Mucosa of descending colon (tissue), 3 donors: ENCODE measurements at regions of chr10 and their contacts with region 1.

Region 1: DNA sequence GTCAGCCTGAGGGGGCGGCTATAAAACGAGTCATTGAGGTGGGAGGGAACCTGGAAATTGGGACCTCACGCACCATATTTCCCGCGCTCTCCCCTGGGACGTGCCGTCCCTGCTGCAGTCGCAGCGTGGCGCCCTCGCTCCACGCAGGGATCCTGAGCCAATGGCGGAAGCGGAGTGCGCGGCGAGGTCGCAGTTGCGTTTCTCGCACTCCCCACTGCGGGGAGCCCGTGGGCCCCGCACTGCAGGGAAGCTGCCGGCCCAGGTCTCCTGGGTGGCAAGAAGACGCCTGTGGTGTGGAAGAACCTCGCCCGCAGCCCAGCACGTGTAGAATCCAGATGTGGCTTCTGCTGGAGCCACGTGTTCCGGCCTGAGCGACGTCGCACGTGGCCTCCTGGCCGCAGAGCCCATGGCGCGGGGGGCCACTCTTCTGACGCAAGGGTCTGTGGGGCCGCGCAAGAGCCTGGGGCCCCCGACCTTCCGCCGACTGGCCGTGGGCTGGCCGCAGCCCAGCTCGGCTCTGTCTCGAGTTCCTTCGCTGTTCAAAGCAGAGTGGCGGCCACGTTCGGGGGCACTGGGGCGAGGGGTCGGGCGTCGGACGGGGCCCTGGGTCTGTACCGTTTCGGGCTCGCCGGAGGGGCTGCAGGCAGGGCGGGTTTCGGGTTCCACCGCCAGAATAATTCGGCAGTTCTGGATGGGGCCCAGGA is 26.4 kb downstream of the HIF1AN start:
- DNase-seq: peak; percentile 75 to 86 (median 82)
- ATAC-seq: peak; percentile 99
- H3K4me3 ChIP-seq: no peak overlapping the region
- H3K4me1 ChIP-seq: peaks cover 11% of the 10 kb centered on the region
- CTCF ChIP-seq: peak; percentile 97

Region 2: GRCh38 chr10:100625816-100626215 is 63.7 kb after region 1 on chr10:
- intact Hi-C with region 1: no loop called
- DNase-seq: no peak
- ATAC-seq: no peak
- H3K4me3 ChIP-seq: no peak overlapping the region
- H3K4me1 ChIP-seq: no peaks in the 10 kb centered on the region
- CTCF ChIP-seq: no peak

Region 3: GRCh38 chr10:100730725-100731406 is 168.7 kb after region 1 on chr10:
- intact Hi-C with region 1: loop called in 1 of 2 experiments (anchors 10 kb)
- DNase-seq: peak in 1 of 3 donors; percentile 32
- ATAC-seq: peak; percentile 63
- H3K4me3 ChIP-seq: no peak overlapping the region
- H3K4me1 ChIP-seq: peaks cover 20% of the 10 kb centered on the region
- CTCF ChIP-seq: no peak

Region 4: GRCh38 chr10:100743626-100744135 is 181.5 kb after region 1 on chr10:
- intact Hi-C with region 1: loop called (anchors 10 kb)
- DNase-seq: peak in 1 of 3 donors; percentile 34
- ATAC-seq: peak; percentile 73
- H3K4me3 ChIP-seq: no peak overlapping the region
- H3K4me1 ChIP-seq: peaks cover 17% of the 10 kb centered on the region
- CTCF ChIP-seq: peak; percentile 40

Region 5: GRCh38 chr10:100878291-100878910 is 316.2 kb after region 1 on chr10:
- intact Hi-C with region 1: loop called in 1 of 2 experiments (anchors 5 kb)
- DNase-seq: peak in 2 of 3 donors; percentile 60 to 65
- ATAC-seq: peak; percentile 93
- H3K4me3 ChIP-seq: no peak overlapping the region
- H3K4me1 ChIP-seq: peaks cover 14% of the 10 kb centered on the region
- CTCF ChIP-seq: peak; percentile 15